Activated CD4-positive, alpha-beta T cell treated with anti-CD3 and anti-CD28 coated beads for 36 hours (primary cell): ENCODE measurements at regions of chr13 and their contacts with region 1.

Region 1: GRCh38 chr13:41492404-41493260 is 35.3 kb downstream of the RGCC start:
- DNase-seq: peak; percentile 44
- ATAC-seq: peak; percentile 76
- H3K4me3 Mint-ChIP-seq: peak overlapping the region; percentile 29
- H3K27ac Mint-ChIP-seq: peak overlapping the region; percentile 92
- H3K4me1 Mint-ChIP-seq: peaks cover 89% of the 10 kb centered on the region
- H3K27me3 Mint-ChIP-seq: no peaks in the 10 kb centered on the region

Region 2: DNA sequence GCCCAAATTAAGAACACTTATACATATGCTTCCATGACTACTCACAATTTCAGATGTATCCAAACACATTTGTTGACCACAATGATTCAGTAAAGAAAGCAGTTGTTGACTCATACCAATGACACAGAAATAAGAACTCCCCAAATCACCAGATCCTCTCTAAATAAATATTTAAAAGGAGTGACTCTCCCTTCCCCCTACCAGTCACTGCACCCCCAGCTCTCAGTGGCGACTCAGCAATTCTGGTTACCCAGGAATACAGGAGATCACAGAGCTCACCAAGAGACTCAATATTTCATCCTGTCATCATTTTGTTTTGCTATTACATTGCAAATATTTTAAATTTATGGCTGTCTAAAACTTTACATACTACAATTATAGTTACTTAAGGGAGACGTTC is 96.3 kb after region 1 on chr13:
- CTCF ChIA-PET with region 1: no interaction called
- POLR2A ChIA-PET with region 1: no interaction called
- intact Hi-C with region 1: loop called in 1 of 2 experiments (anchors 5 kb)
- DNase-seq: peak; percentile 67
- ATAC-seq: peak; percentile 83
- H3K4me3 Mint-ChIP-seq: no peak overlapping the region
- H3K27ac Mint-ChIP-seq: no peak overlapping the region
- H3K4me1 Mint-ChIP-seq: peaks cover 11% of the 10 kb centered on the region
- H3K27me3 Mint-ChIP-seq: no peaks in the 10 kb centered on the region